Activated CD8-positive, alpha-beta T cell treated with anti-CD3 and anti-CD28 coated beads for 36 hours (primary cell): ENCODE measurements at regions of chr7 and their contacts with region 1.

Region 1: GRCh38 chr7:100586266-100587025 is at the start of gene FBXO24:
- DNase-seq: peak; percentile 99
- ATAC-seq: peak; percentile 84
- H3K4me3 Mint-ChIP-seq: peak within 1 kb of the TSS; percentile 98
- H3K27ac Mint-ChIP-seq: peak within 1 kb of the TSS; percentile 93
- H3K4me1 Mint-ChIP-seq: peaks cover 20% of the 10 kb centered on the region
- H3K27me3 Mint-ChIP-seq: peaks cover 5% of the 10 kb centered on the region
- CTCF ChIP-seq: no peak
- total RNA-seq, gene FBXO24: 1.4 to 1.5 TPM

Region 2: DNA sequence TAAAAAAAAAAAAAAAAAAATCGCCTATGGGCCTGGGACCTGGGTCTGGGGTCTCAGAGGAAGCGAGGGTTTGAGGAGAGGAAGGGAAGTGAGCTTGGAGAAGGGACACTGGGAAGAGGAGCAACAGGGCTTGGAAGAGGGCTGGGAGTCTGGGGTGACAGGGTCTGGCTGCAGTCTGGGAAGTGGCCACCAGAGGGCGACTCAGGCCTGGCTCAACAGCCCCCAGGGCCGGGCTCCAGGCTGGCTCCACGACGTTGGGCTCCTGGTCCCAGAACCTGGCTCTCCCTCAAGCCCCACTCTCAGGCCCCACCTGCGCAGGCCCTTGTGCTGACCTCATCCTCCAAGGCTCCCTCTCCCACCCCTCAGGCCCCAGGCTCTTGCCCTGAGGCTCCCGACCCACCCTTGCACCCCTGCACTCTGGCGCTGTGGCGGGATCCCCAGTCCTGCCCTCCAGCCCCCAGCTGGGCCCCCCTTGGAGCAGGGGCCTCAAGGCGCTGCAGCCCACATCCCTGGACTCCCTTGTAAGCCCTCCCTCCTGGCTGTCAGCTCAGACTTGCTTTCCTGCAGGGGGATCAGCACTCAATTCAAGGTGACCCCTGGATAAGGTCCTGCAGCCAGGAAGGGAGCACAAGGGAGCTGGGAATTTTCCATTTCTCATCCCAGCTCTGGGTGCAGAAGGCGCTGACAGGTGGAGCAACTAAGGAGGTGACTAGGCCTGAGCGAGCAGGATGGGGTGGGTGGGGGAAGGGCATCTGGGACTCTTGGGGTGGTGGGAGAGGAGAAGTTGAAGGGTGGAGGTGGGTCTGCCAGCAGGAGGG is 117.0 kb before region 1 on chr7:
- CTCF ChIA-PET with region 1: interaction called, 15 read pairs
- POLR2A ChIA-PET with region 1: no interaction called
- intact Hi-C with region 1: no loop called
- DNase-seq: peak; percentile 87
- ATAC-seq: peak; percentile 89
- H3K4me3 Mint-ChIP-seq: no peak overlapping the region
- H3K27ac Mint-ChIP-seq: peak overlapping the region; percentile 57
- H3K4me1 Mint-ChIP-seq: peaks cover 33% of the 10 kb centered on the region
- H3K27me3 Mint-ChIP-seq: no peaks in the 10 kb centered on the region
- CTCF ChIP-seq: peak; percentile 82

Region 3: GRCh38 chr7:100556541-100556940 is 29.9 kb before region 1 on chr7:
- CTCF ChIA-PET with region 1: interaction called, 12 read pairs
- POLR2A ChIA-PET with region 1: interaction called, 3 read pairs
- intact Hi-C with region 1: no loop called
- DNase-seq: no peak
- ATAC-seq: no peak
- H3K4me3 Mint-ChIP-seq: no peak overlapping the region
- H3K27ac Mint-ChIP-seq: peak overlapping the region; percentile 82
- H3K4me1 Mint-ChIP-seq: peaks cover 16% of the 10 kb centered on the region
- H3K27me3 Mint-ChIP-seq: no peaks in the 10 kb centered on the region
- CTCF ChIP-seq: no peak

Region 4: DNA sequence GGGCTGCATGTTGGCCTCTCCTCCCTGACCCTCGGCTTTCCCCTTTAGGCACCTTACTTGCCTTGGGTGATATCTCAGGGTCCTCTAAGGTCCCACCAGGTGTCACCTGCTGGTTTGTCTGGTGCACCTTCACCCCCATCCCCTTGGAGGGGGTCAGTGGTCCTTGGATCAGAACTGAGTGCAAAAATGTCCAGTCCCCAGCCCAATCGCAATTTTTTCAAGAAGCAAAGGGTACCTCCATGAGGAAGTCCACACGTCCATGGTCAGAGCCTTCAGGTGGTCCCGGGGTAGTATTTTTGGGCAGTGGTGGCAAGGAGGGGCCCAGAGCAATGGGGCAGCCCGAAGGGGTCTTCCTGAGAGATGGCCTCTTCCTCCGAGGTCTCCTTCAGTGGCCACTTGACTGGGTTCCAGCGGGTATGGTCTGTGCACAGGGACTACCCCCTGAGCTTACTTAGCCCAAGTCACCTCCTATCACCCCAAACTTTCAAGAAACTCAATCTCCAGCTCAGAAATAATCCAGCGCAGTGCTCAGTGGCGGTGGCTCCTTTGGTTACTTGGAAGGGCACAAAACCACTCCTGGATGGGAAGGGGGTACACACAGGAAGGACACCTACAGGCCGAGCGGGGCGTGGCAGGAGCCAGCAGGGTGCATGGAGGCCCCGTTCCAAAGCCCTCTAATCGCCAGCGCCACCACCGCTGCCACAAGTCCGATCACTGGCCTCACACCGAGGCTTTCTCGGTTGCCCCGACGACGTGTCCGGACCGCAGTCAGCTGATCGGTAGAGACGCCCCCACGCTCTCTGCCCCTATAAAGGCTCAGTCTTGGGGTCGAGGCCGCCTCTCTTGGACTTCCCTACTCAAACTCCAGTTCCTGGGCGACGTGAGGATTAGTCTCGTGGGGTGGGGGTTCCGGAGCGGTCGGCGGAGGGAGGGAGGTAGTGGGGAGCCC is 17.3 kb before region 1 on chr7:
- CTCF ChIA-PET with region 1: interaction called, 39 read pairs
- POLR2A ChIA-PET with region 1: interaction called, 22 read pairs
- intact Hi-C with region 1: no loop called
- DNase-seq: peak; percentile 73
- ATAC-seq: peak; percentile 50
- H3K4me3 Mint-ChIP-seq: peak overlapping the region; percentile 27
- H3K27ac Mint-ChIP-seq: peak overlapping the region; percentile 8
- H3K4me1 Mint-ChIP-seq: peaks cover 42% of the 10 kb centered on the region
- H3K27me3 Mint-ChIP-seq: no peaks in the 10 kb centered on the region
- CTCF ChIP-seq: peak; percentile 44

Region 5: DNA sequence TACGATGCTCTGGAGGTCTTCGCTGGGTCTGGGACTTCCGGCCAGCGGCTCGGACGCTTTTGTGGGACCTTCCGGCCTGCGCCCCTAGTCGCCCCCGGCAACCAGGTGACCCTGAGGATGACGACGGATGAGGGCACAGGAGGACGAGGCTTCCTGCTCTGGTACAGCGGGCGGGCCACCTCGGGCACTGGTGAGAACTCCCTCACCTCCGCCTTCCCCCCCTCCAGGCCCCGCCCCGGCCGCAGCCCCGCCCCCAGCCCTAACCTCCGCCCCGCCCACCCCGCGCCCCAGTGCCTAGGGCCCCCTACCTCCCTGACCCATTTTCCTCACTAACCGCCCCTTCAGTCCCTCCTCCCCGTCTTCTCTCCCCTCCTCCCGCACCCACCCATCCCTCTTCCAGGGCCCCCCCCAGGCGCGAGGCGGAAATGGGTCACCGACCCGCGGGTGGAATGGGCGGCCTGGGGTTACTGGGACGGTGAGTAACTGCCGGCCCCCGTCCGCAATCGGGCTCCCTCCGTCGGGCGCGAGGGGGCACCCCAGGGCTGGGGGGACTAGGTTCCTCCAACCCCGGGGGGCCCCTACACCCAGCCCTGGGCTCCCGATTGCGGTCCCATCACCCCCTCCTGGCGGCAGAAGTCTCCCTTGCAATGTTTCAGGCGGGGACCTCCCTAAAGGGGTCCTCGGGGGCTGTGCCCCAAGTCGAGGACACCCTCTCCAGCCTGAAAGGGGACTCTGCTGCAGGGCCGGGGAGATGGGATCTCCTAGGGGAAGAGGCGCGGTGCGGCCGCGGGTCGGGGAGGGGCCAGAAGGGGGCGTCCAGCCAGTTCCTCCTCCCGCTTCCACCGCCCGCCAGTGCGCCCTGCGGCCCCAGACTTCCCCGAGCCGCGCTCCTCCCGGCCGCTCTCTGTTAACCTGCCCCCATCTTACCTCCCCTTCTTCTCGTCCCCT is 17.9 kb after region 1 on chr7:
- CTCF ChIA-PET with region 1: interaction called, 6 read pairs
- POLR2A ChIA-PET with region 1: interaction called, 14 read pairs
- intact Hi-C with region 1: no loop called
- DNase-seq: peak; percentile 87
- ATAC-seq: peak; percentile 81
- H3K4me3 Mint-ChIP-seq: peak overlapping the region; percentile 78
- H3K27ac Mint-ChIP-seq: peak overlapping the region; percentile 82
- H3K4me1 Mint-ChIP-seq: peaks cover 19% of the 10 kb centered on the region
- H3K27me3 Mint-ChIP-seq: peaks cover 3% of the 10 kb centered on the region
- CTCF ChIP-seq: peak; percentile 72

Region 6: DNA sequence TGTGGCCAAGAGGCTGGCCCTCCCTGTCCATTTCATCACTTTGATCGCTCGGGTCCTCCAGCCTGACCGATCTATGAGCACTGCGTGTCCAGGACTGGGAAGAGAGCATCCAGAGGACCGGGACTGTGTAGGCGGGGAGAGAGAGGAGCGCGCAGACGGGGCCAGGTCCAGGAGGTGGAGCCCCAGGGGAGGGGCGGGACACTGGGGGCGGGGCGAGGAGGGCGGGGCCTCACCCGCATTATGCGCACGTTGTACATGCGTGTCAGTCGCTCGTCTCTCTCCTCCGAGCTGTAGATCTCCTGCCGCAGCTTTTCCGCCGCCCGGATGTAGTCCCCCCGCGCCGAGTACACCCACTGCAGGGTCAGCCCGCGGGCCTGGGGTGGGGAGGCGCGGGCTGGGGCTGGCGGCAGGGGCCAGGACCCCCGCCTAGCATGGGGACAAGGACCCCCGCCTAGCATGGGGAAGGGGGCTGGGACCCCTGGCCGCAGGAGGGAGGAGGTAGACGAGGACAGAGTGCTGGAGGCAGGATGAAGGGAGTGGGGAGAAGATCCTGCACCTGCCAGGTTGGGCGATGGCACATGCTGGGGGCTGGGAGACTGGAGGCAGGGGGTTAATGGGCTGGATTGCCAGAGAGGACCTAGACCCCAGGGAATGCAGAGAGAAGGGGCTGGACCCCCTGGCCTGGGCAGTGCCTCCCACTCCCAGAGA is 40.2 kb after region 1 on chr7:
- CTCF ChIA-PET with region 1: interaction called, 5 read pairs
- POLR2A ChIA-PET with region 1: interaction called, 13 read pairs
- intact Hi-C with region 1: no loop called
- DNase-seq: peak; percentile 93
- ATAC-seq: peak; percentile 97
- H3K4me3 Mint-ChIP-seq: peak overlapping the region; percentile 72
- H3K27ac Mint-ChIP-seq: peak overlapping the region; percentile 81
- H3K4me1 Mint-ChIP-seq: peaks cover 23% of the 10 kb centered on the region
- H3K27me3 Mint-ChIP-seq: no peaks in the 10 kb centered on the region
- CTCF ChIP-seq: no peak

Region 7: GRCh38 chr7:100632951-100633717 is 46.7 kb after region 1 on chr7:
- CTCF ChIA-PET with region 1: interaction called, 30 read pairs
- POLR2A ChIA-PET with region 1: interaction called, 3 read pairs
- intact Hi-C with region 1: no loop called
- DNase-seq: peak; percentile 73
- ATAC-seq: peak; percentile 77
- H3K4me3 Mint-ChIP-seq: peak overlapping the region; percentile 82
- H3K27ac Mint-ChIP-seq: peak overlapping the region; percentile 93
- H3K4me1 Mint-ChIP-seq: peaks cover 23% of the 10 kb centered on the region
- H3K27me3 Mint-ChIP-seq: peaks cover 4% of the 10 kb centered on the region
- CTCF ChIP-seq: peak; percentile 51